Activated CD4-positive, alpha-beta T cell treated with anti-CD3 and anti-CD28 coated beads, Interleukin-2, amount 10 ng/mL, durations not matched to agents 7 days and 5 days (primary cell): ENCODE measurements at regions of chr5 and their contacts with region 1.

Region 1: DNA sequence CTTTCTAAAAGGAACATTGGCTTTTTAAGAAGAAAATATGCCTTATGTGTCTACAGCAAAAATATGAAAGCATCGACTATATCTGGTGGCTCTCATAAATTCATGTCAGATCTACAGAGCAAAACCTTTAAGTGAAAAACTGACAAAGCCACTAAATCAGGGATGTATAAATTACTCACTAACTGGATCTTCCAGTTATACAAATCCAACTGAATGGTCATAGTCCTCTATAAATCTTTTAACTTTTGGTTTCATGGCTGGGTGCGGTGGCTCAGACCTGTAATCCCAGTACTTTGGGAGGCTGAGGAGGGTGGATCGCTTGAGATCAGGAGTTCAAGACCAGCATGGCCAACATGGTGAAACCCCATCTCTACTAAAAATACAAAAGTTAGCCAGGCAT is 29.2 kb upstream of the GZMA start:
- DNase-seq: no peak
- H3K4me3 Mint-ChIP-seq: peak overlapping the region; percentile 61
- H3K27ac Mint-ChIP-seq: peak overlapping the region; percentile 92
- H3K4me1 Mint-ChIP-seq: peaks cover 62% of the 10 kb centered on the region
- H3K27me3 Mint-ChIP-seq: peaks cover 4% of the 10 kb centered on the region

Region 2: GRCh38 chr5:54807421-54807820 is 265.8 kb before region 1 on chr5:
- CTCF ChIA-PET with region 1: no interaction called
- POLR2A ChIA-PET with region 1: no interaction called
- DNase-seq: no peak
- H3K4me3 Mint-ChIP-seq: no peak overlapping the region
- H3K27ac Mint-ChIP-seq: no peak overlapping the region
- H3K4me1 Mint-ChIP-seq: no peaks in the 10 kb centered on the region
- H3K27me3 Mint-ChIP-seq: peaks cover 4% of the 10 kb centered on the region

Region 3: GRCh38 chr5:55004729-55005128 is 68.5 kb before region 1 on chr5:
- CTCF ChIA-PET with region 1: no interaction called
- POLR2A ChIA-PET with region 1: no interaction called
- DNase-seq: no peak
- H3K4me3 Mint-ChIP-seq: no peak overlapping the region
- H3K27ac Mint-ChIP-seq: no peak overlapping the region
- H3K4me1 Mint-ChIP-seq: peaks cover 30% of the 10 kb centered on the region
- H3K27me3 Mint-ChIP-seq: peaks cover 23% of the 10 kb centered on the region

Region 4: DNA sequence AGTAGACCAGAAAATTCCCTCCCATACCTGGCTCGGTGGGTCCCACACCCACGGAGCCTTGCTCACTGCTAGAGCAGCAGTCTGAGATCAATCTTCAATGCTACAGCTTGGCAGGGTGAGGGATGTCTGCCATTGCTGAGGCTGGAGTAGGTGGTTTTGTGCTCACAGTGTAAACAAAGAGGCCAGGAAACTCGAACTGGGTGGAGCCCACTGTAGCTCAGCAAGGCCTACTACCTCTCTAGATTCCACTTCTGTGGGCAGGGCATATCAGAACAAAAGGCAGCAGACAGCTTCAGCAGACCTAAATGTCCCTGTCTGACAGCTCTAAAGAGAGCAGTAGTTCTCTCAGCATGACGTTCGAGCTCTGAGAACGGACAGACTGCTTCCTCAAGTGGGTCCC is 23.6 kb after region 1 on chr5:
- CTCF ChIA-PET with region 1: interaction called, 19 read pairs
- POLR2A ChIA-PET with region 1: no interaction called
- DNase-seq: peak; percentile 81
- H3K4me3 Mint-ChIP-seq: peak overlapping the region; percentile 49
- H3K27ac Mint-ChIP-seq: peak overlapping the region; percentile 92
- H3K4me1 Mint-ChIP-seq: peaks cover 89% of the 10 kb centered on the region
- H3K27me3 Mint-ChIP-seq: peaks cover 9% of the 10 kb centered on the region